Activated T-helper 2 cell treated with anti-CD3 and anti-CD28 coated beads, Interferon-gamma antibody, Interleukin-2, Interleukin-4, amounts not matched to agents 10 μg/mL and 5 μg/mL and 100 μg/mL, durations not matched to agents 14 hours and 24 hours and 36 hours (primary cell): ENCODE measurements at regions of chr11 and their contacts with region 1.

Region 1: DNA sequence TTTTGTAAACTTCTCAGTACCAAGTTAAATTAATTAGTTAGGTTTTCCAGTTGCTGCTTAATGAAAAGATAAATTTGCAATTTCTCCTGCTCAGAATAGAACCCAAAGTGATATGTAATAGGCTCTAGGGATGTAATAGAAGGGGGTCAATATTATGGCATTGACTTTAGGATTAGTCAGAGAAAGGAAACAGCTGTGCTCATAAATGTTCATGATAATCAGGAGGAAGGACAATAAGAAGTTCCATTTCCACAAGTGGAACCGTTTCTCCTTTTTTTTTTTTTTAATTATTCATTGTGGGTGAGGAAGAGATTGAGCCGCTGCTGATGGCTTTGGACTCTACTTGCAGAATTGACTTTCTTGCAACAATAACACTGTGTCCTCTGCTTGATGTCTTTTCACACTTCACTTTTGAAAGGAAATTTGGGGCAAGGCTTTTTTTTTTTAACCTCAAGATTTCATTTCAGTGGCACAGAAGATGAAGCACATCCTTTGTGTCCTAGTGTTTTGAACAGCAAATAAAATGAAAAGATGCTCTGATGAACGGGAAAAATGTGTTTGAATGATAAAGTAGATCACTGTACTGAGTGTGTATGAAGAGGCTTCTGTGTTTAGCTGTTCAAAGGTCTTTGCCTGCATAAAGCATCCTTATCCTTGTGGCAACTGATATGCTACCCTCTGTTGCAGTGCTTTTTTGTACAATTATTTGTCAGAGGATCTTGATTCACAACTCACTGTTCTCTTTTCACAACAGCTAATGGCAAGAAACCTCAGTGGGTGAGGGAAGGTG is 62.4 kb downstream of the GAS2 start:
- DNase-seq: no peak
- H3K4me3 Mint-ChIP-seq: no peak overlapping the region
- H3K27ac Mint-ChIP-seq: no peak overlapping the region
- H3K4me1 Mint-ChIP-seq: no peaks in the 10 kb centered on the region
- H3K27me3 Mint-ChIP-seq: no peaks in the 10 kb centered on the region

Region 2: GRCh38 chr11:22666688-22667439 is 61.9 kb before region 1 on chr11:
- intact Hi-C with region 1: loop called (anchors 5 kb)
- DNase-seq: no peak
- H3K4me3 Mint-ChIP-seq: peak overlapping the region; percentile 81
- H3K27ac Mint-ChIP-seq: no peak overlapping the region
- H3K4me1 Mint-ChIP-seq: peaks cover 22% of the 10 kb centered on the region
- H3K27me3 Mint-ChIP-seq: peaks cover 55% of the 10 kb centered on the region

Region 3: DNA sequence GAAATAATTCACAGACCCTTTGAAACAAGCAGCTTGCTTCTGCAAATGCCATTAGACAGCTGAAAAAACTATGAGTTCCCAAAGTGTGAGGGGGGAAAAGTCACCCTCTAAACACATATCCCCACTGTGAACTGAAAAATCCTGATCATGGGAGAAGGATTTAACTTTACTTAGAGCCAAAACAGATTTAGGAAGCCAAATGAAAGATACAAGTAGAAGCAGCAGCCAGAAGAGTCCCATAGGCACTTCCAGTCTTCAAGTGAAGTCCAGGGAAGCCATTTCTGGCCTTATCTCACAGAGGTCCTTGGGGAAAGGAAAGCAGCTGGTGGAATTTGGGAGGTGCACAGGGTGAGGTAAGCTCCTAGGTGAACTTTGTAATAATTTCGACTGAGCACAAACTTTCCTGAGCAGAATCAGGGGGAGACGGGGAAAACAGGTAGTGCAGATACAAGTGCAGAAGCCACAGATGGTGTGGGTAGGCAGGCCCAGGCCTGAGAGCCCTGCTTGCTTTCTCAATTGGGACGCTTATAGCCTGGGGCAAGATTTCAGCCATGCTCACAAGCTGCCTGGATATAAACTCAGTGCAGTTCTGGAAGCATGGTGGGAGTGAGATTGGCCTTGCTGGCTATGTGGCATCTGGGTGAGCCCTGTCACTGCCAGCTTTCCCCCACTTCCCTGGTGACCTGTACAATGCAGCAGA is 17.6 kb before region 1 on chr11:
- intact Hi-C with region 1: no loop called
- DNase-seq: no peak
- H3K4me3 Mint-ChIP-seq: no peak overlapping the region
- H3K27ac Mint-ChIP-seq: no peak overlapping the region
- H3K4me1 Mint-ChIP-seq: peaks cover 2% of the 10 kb centered on the region
- H3K27me3 Mint-ChIP-seq: no peaks in the 10 kb centered on the region

Region 4: GRCh38 chr11:22792497-22792896 is 63.7 kb after region 1 on chr11:
- intact Hi-C with region 1: no loop called
- DNase-seq: no peak
- H3K4me3 Mint-ChIP-seq: no peak overlapping the region
- H3K27ac Mint-ChIP-seq: no peak overlapping the region
- H3K4me1 Mint-ChIP-seq: no peaks in the 10 kb centered on the region
- H3K27me3 Mint-ChIP-seq: no peaks in the 10 kb centered on the region